Left cardiac atrium (tissue), 4 donors: ENCODE measurements at regions of chr1 and their contacts with region 1.

Region 1: DNA sequence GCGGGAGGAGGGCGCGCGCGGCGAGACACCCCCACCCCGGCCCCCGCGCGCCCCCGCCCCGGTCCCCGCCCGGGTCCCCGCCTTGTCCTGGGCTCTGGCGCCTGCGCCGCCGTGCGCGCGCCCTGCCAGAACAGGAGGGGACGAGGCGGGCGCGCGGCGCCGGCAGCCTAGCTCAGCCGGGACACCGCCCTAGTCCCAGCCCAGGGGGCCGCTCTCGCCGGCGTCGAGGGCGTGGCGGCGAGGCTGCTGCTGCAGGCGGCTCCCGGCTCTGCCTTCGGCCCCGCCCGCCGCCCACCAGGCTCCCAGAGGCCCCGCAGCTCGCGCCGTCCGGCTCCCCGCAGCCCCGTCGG is at the start of gene RCAN3:
- DNase-seq: peak; percentile 87
- ATAC-seq: peak; percentile 98
- total RNA-seq, gene RCAN3: 5.8 to 6.1 TPM

Region 2: GRCh38 chr1:24415334-24415909 is 87.3 kb before region 1 on chr1 and contains the start of gene NIPAL3:
- intact Hi-C with region 1: loop called in 1 of 2 experiments (anchors 5 kb)
- DNase-seq: peak; percentile 98
- ATAC-seq: peak; percentile 95
- total RNA-seq, gene NIPAL3: 20.4 to 26.2 TPM